Lower leg skin (tissue), 4 donors: ENCODE measurements at regions of chr22 and their contacts with region 1.

Region 1: DNA sequence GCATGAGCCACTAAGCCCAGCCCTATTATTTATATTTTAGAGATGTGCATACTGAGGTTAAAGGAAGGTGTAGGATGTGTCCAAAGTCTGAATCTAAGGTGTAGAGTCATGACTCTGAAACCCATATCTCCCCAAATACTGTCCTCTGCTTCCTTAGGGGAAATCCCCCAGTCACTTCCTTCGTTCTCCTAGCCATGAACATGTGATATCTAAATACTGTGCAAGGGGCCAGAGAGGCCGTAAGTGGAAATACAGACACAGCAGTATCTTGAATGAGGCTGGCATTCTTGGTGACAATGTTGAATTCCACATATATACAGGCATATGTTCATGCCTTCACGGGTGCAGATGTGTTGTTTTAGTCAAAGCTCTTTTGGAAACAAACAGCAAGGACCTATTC is 21.3 kb upstream of the PATZ1 start:
- DNase-seq: no peak
- H3K4me3 ChIP-seq: no peak overlapping the region
- CTCF ChIP-seq: no peak
- POLR2A ChIP-seq: no peak

Region 2: GRCh38 chr22:31139866-31140716 is 227.3 kb before region 1 on chr22 and contains the start of gene PLA2G3:
- intact Hi-C with region 1: no loop called
- DNase-seq: peak in 1 of 2 donors; percentile 37
- H3K4me3 ChIP-seq: no peak within 1 kb of the TSS
- CTCF ChIP-seq: no peak
- POLR2A ChIP-seq: no peak
- total RNA-seq, gene PLA2G3: 6.5 to 11.3 (median 8.7) TPM

Region 3: DNA sequence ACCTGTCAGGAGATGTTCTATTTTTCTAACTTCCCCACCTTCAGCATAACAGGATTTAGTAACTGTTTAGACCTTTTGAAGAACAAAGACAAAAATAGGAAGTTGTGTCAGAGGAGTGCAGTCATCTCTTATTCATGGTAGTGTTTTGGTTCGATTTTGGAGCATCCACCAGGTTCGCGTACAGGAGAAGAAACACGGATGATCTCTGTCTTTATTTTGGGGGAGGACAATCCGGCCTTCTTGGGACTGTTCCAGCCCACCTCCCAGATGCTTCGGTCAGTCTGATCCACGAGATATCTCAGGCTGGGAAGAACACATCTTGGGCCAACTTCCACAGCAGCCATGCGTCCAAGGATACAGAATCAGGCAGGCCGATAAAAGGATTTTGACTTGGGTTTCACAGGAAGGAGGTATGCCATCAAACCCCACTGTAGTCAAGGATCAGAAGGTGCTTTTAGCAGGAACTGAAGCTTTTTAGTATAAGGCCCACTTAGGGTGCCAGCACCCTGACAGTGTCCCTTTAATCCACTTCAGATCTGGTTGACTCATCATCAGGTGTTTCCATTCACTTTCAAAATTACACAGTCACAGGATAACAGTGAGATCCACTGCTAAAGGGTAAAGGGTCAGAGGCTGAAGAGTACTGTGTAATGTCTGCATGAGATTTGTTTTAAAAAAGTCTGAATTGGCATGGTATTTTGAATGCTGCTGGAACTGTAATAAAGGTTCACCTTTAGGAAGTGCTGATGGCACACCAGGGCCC is 37.8 kb before region 1 on chr22:
- intact Hi-C with region 1: loop called (anchors 2 kb)
- DNase-seq: no peak
- H3K4me3 ChIP-seq: no peak overlapping the region
- CTCF ChIP-seq: no peak
- POLR2A ChIP-seq: no peak

Region 4: DNA sequence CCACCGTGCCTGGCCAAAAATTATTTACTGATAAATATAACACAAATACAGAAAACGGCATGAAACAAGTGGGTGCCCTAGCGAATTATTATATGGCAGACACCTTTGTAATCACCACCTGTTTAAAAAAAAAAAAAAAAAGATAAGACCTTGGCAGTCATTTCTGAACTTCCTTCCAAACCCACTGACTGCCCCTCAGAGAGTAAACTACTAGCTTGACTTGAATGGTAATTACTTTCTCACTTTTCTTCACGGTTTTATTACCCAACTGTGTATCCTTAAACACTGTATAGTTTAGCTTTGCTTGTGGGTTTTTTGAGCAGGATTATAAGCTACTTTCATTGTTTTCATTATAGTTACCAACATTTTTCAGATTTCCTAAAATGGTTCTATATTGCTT is 152.6 kb after region 1 on chr22:
- intact Hi-C with region 1: no loop called
- DNase-seq: no peak
- H3K4me3 ChIP-seq: no peak overlapping the region
- CTCF ChIP-seq: no peak
- POLR2A ChIP-seq: no peak